ENCODE measurements at regions of chr19 and their contacts with region 1.

Region 1: GRCh38 chr19:3108775-3109174 is 14.6 kb downstream of the GNA11 start:
- DNase-seq: peak; percentile 91
- H3K4me3 Mint-ChIP-seq: no peak overlapping the region
- H3K27ac Mint-ChIP-seq: peak overlapping the region; percentile 57
- H3K4me1 Mint-ChIP-seq: peaks cover 7% of the 10 kb centered on the region
- H3K27me3 Mint-ChIP-seq: peaks cover 1% of the 10 kb centered on the region

Region 2: GRCh38 chr19:2648528-2648937 is 460.2 kb before region 1 on chr19:
- intact Hi-C with region 1: loop called (anchors 2 kb)
- DNase-seq: peak; percentile 92
- H3K4me3 Mint-ChIP-seq: no peak overlapping the region
- H3K27ac Mint-ChIP-seq: no peak overlapping the region
- H3K4me1 Mint-ChIP-seq: no peaks in the 10 kb centered on the region
- H3K27me3 Mint-ChIP-seq: no peaks in the 10 kb centered on the region

Region 3: DNA sequence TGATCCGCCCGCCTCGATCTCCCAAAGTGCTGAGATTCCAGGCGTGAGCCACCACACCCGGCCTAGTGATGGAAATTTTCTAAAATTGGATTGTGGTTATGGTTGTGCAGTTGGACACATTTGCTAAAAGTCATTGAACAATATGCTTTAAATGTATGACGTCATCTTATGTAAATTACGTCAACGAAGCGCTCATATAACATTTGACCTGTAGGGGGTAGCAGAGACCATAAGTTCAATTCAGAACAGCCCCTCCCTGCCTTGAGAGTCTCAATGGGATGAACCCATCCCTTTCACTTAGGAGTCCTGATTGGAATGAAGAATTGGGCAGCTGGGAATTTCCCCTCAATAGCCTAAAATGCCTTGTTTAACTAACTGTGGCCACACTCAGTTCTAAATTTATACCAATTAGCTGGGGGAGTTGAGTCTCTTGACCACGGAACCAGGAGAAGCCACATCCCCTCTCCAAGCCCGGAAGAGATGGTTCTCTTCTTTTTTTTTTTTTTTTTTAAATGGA is 146.7 kb before region 1 on chr19:
- intact Hi-C with region 1: loop called (anchors 1 kb)
- DNase-seq: peak; percentile 91
- H3K4me3 Mint-ChIP-seq: no peak overlapping the region
- H3K27ac Mint-ChIP-seq: no peak overlapping the region
- H3K4me1 Mint-ChIP-seq: peaks cover 4% of the 10 kb centered on the region
- H3K27me3 Mint-ChIP-seq: no peaks in the 10 kb centered on the region

Region 4: GRCh38 chr19:3075895-3076431 is 32.8 kb before region 1 on chr19:
- intact Hi-C with region 1: loop called (anchors 1 kb)
- DNase-seq: peak; percentile 92
- H3K4me3 Mint-ChIP-seq: no peak overlapping the region
- H3K27ac Mint-ChIP-seq: no peak overlapping the region
- H3K4me1 Mint-ChIP-seq: no peaks in the 10 kb centered on the region
- H3K27me3 Mint-ChIP-seq: peaks cover 2% of the 10 kb centered on the region

Region 5: DNA sequence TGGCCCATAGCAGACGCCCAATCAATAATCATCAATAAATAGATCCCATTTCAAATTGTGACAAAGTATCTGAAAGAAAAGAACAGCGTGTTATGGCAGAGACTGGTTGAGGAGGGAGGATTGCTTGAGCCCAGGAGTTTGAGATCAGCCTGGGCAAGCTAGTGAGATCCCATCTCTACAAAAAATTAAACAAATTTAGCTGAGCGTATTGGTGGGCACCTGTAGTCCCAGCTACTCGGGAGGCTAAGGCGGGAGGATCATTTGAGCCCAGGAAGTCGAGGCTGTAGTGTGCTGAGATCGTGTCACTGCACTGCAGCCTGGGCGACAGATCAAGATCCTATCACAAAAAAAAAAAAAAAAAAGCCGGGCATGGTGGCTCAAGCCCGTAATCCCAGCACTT is 21.0 kb before region 1 on chr19:
- intact Hi-C with region 1: no loop called
- DNase-seq: no peak
- H3K4me3 Mint-ChIP-seq: no peak overlapping the region
- H3K27ac Mint-ChIP-seq: no peak overlapping the region
- H3K4me1 Mint-ChIP-seq: peaks cover 2% of the 10 kb centered on the region
- H3K27me3 Mint-ChIP-seq: peaks cover 12% of the 10 kb centered on the region

Region 6: DNA sequence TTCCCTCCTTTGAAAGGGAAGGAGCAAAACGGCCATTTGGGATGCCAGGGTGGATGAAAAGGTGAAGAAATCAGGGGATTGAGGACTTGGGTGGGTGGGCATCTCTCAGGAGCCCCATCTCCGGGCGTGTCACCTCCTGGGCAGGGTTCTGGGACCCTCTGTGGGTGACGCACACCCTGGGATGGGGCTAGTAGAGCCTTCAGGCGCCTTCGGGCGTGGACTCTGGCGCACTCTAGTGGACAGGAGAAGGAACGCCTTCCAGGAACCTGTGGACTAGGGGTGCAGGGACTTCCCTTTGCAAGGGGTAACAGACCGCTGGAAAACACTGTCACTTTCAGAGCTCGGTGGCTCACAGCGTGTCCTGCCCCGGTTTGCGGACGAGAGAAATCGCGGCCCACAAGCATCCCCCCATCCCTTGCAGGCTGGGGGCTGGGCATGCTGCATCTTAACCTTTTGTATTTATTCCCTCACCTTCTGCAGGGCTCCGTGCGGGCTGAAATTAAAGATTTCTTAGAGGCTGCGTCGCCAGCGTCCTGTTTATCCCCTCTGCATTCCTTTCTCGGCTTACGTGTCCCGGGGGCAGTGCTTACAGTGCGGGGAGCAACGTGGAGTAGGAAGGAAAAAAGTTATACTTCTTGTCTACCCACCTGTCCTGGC is 54.6 kb after region 1 on chr19:
- intact Hi-C with region 1: no loop called
- DNase-seq: peak; percentile 91
- H3K4me3 Mint-ChIP-seq: no peak overlapping the region
- H3K27ac Mint-ChIP-seq: peak overlapping the region; percentile 56
- H3K4me1 Mint-ChIP-seq: peaks cover 33% of the 10 kb centered on the region
- H3K27me3 Mint-ChIP-seq: no peaks in the 10 kb centered on the region

Measured in activated CD4-positive, alpha-beta T cell treated with anti-CD3 and anti-CD28 coated beads, Interleukin-2, amount 10 ng/mL, durations not matched to agents 24 days and 14 days (primary cell).